PC-9 (cell line): ENCODE measurements at regions of chr10 and their contacts with region 1.

Region 1: DNA sequence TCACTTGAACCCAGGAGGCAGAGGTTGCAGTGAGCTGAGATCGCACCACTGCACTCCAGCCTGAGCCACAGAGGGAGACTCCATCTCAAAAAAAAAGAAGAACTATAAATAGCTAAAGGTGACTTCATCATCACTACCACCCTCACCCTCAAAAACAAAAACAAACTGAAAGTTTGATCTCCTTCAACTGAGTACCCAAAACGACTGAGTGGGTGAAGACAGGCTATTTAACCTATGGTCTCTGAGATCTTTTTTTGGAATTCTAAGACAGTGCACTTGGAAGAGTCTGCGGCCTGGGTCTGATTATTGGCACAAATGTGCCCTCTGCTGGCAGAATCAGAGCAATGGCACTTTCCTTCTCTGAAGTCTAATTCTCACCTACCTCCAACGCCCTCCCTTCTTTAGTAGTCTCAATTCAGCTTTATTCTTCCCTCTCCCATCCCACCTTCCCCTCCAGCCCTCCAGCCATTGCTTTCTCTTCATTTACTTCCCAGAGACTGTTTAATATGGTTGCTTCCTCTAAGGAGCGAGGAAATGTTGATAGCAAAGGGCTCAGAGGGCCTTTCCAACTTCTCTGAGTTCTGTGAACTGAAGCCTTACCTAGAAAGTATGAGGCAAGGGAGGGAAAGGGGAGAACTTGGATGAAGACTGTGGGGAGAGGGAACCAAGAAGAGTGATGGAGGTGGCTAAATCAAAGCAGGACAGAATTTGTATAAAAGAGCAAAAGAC is 2.9 kb upstream of the MYOZ1 start:
- DNase-seq: peak; percentile 48 to 67
- H3K4me3 ChIP-seq: no peak overlapping the region
- H3K27ac ChIP-seq: no peak overlapping the region
- H3K4me1 ChIP-seq: peaks cover 7% of the 10 kb centered on the region
- H3K27me3 ChIP-seq: no peaks in the 10 kb centered on the region
- CTCF ChIP-seq: peak; percentile 96

Region 2: DNA sequence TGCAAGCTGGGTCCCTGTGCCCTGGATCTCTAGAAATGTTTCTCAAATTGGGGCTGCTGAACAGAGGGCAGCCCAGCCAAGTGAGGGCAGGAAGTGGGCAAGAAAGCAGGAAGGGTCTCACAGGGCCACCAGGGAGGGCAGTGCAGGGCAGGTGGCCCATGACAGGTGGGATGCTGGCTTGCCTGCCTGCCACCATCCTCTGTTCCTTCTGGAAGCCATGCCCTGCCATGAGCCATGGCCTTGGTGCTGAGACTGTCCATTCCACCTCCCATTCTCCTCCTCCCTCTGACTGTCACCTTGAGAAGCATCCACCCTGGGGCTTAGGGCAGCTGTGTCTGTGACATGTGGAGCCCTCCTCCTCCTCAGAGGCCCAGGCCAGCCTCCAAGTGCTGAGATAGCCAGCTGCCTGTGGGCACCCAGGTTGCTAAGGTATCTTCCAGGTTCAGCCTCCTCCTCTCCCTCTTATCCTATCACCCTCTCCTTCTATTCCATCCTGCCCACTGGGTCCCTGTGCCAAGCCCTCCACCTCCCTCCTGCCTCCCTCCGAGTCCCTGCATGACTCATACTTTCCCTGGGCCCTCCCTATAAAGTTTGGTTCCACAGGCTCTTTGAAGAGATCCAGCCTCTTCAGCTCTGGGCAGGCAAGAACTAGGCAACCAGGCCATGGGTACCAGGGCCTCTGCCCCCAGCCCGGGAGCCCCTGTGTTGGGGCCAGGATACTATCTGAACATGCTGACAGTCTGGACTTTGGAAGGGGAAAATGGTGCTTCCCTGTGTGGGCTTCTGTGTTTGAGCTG is 1872.2 kb before region 1 on chr10:
- CTCF ChIA-PET with region 1: interaction called, 20 read pairs
- POLR2A ChIA-PET with region 1: no interaction called
- intact Hi-C with region 1: no loop called
- DNase-seq: peak; percentile 76 to 79
- H3K4me3 ChIP-seq: peak overlapping the region; percentile 81
- H3K27ac ChIP-seq: 0 out of 2 replicates have a peak overlapping the region, but pooled peaks have one; percentile 53
- H3K4me1 ChIP-seq: peaks cover 74% of the 10 kb centered on the region
- H3K27me3 ChIP-seq: no peaks in the 10 kb centered on the region
- CTCF ChIP-seq: no peak

Region 3: DNA sequence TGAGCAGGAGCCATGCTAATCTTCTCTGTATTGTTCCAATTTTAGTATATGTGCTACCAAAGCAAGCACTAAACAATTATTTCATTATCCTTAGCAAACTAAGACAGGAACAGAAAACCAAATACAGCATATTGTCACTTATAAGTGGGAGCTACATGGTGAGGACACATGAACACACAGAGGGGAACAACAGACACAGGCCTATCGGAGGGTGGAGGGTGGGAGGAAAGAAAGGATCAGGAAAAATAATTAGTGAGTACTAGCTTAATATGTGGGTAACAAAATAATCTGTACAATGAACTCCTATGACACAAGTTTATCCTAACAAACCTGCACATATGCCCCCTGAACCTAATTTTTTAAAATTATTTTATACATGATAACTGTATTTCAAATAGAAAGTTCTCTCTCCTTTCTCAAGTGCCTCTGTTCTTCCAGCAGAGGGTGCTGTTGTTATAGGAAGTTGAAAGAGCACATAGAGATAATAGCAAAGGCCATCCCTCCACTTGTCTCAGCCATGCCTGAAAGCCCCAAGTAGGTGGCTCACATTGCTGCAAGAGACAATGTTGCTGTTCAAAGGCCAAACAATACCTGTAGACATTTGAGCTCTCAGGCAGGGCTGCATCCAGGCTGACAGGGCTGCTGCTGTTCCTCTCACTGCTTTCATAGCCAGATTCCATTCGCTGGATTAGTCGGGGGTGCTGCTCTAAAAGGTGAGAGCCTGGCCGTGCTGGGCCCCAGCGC is 114.9 kb before region 1 on chr10:
- CTCF ChIA-PET with region 1: interaction called, 24 read pairs
- POLR2A ChIA-PET with region 1: no interaction called
- intact Hi-C with region 1: loop called (anchors 1 kb)
- DNase-seq: peak; percentile 44 to 76
- H3K4me3 ChIP-seq: no peak overlapping the region
- H3K27ac ChIP-seq: no peak overlapping the region
- H3K4me1 ChIP-seq: no peaks in the 10 kb centered on the region
- H3K27me3 ChIP-seq: no peaks in the 10 kb centered on the region
- CTCF ChIP-seq: peak; percentile 96

Region 4: DNA sequence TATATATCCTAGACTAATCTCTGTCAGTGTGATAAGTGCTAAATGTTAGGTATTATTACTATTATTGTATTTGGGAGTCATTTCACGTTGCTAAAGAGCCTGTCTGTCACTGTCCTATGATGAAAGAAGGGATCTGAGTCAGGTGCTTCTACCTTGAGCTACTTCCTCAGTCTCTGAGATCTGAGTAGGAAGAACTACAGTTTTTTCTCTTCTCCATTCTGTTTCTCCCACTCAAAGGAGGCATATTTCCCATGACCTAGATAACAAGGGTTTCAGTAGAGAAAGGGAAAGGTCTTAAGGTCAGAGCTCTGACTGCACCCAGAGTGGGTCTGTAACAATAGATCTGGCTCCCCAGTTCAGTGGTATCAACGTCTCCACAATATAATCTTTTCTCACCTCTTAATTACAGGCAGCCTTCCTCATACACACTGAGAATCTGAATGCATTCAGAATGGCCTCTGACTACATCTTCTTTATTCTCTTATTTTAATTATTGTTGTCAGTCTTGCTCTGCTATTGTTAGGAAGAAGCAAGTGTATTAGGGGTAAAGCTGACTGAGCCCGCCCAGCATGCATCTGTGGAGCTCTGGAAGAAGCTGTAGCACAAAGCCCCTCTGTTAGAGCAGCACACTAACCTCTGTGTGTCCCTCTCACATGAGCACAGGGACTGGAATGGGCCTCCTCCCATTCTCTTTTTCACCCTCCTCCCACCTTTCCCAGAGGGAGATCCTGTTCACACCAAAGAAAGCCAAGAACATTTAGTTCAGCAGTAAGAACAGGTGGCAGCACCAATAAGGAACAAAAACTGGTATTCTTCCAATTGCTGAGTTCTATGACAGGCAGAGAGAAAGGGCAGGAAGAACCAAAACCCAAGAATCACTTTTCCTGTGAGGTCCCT is 91.1 kb before region 1 on chr10:
- CTCF ChIA-PET with region 1: interaction called, 10 read pairs
- POLR2A ChIA-PET with region 1: no interaction called
- intact Hi-C with region 1: no loop called
- DNase-seq: no peak
- H3K4me3 ChIP-seq: no peak overlapping the region
- H3K27ac ChIP-seq: no peak overlapping the region
- H3K4me1 ChIP-seq: no peaks in the 10 kb centered on the region
- H3K27me3 ChIP-seq: no peaks in the 10 kb centered on the region
- CTCF ChIP-seq: no peak

Region 5: DNA sequence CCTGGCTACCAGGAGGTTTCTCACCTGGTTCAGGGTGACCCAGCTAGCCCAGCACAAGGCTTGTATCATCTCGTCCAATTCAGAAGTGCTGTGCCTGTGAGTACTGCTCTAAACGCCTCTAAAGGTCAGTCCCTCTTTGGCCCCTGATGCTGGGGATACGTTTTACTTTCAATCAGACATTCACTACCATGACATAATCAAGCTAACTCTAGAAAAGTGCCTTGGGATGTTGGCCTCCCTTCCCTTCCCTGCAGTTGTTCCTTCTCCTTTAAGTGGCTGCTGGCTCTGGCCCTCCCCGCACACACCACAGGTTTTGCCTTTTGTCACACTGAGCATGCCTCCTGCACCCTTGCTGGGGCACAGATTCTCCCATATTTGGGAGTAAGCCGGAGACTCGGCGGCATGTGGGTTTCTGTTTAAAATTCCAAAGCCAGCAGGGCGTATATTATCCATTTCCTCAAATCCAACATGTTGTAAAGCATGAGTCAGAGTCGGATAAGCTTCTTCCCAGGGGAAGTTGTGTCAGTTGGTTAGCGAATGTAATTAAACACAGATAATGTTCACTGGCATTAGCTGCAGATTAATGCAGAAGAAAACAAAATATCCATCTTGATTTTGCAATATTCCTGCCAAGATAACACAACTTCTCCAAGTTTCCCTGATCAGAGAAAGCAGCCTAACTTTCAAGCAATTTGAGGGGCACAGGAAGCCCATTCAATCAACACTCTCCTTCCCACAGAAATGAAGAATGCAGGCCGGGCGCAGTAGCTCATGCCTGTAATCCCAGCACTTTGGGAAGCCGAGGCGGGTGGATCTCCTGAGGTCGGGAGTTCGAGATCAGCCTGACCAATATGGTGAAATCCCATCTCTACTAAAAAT is 321.9 kb after region 1 on chr10:
- CTCF ChIA-PET with region 1: no interaction called
- POLR2A ChIA-PET with region 1: no interaction called
- intact Hi-C with region 1: no loop called
- DNase-seq: peak; percentile 93 to 99
- H3K4me3 ChIP-seq: peak overlapping the region; percentile 43; the same call in 1 of the 2 replicates
- H3K27ac ChIP-seq: peak overlapping the region; percentile 99
- H3K4me1 ChIP-seq: peaks cover 38% of the 10 kb centered on the region
- H3K27me3 ChIP-seq: no peaks in the 10 kb centered on the region
- CTCF ChIP-seq: no peak